Dorsolateral prefrontal cortex (tissue), 120 donors: ENCODE measurements at regions of chr16 and their contacts with region 1.

Region 1: GRCh38 chr16:50548125-50548908 is at the start of gene NKD1:
- DNase-seq: peak in 9 of 10 donors; percentile 39 to 84 (median 67)
- H3K4me3 ChIP-seq: peak within 1 kb of the TSS; percentile 54 to 94 (median 80)
- H3K27ac ChIP-seq: peak within 1 kb of the TSS in 29 of 59 donors; percentile 14 to 83 (median 59)
- H3K27me3 ChIP-seq: peaks cover 0 to 14% (median 0%) of the 10 kb centered on the region in 45 donors
- CTCF ChIP-seq: peak in 1 of 56 donors; percentile 8
- total RNA-seq, gene NKD1: 3.8 to 25.7 (median 12.7) TPM

Region 2: DNA sequence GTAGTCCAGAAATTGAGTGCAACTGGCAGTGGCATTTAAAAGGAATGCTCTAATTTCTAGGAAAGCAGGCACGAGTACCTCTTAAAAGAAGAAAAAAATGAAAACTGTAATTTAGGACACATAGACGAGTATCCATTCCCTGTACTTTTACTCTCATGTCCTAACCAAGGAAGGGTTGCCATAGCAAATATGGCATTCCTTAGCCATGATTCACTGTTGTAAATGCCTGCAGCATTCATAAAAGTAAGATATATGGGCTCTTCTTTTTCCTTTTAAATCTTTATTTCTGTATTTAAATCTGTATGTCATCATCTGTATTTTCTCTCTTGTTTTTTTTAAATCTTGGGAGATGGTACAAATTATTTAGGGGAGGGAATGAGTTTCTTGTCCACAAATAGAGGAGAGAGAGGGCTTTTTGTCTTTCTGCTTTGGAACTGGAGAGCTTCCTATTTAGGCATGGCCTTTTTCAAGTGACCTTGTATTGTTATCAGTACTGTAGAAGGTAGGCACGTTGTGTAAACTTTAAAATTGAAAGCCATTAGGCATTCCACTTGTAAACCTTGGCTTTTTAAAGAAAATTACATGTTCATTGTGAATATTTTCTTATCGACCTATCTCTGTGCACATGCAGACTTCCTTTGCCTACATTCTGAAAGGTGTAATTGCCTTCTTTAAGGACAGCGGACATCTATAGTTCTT is 345.2 kb before region 1 on chr16:
- intact Hi-C with region 1: no loop called
- DNase-seq: no peak
- H3K4me3 ChIP-seq: no peak overlapping the region
- H3K27ac ChIP-seq: peak overlapping the region in 2 of 59 donors; percentile 55 to 65
- H3K27me3 ChIP-seq: no peaks in the 10 kb centered on the region
- CTCF ChIP-seq: no peak

Region 3: DNA sequence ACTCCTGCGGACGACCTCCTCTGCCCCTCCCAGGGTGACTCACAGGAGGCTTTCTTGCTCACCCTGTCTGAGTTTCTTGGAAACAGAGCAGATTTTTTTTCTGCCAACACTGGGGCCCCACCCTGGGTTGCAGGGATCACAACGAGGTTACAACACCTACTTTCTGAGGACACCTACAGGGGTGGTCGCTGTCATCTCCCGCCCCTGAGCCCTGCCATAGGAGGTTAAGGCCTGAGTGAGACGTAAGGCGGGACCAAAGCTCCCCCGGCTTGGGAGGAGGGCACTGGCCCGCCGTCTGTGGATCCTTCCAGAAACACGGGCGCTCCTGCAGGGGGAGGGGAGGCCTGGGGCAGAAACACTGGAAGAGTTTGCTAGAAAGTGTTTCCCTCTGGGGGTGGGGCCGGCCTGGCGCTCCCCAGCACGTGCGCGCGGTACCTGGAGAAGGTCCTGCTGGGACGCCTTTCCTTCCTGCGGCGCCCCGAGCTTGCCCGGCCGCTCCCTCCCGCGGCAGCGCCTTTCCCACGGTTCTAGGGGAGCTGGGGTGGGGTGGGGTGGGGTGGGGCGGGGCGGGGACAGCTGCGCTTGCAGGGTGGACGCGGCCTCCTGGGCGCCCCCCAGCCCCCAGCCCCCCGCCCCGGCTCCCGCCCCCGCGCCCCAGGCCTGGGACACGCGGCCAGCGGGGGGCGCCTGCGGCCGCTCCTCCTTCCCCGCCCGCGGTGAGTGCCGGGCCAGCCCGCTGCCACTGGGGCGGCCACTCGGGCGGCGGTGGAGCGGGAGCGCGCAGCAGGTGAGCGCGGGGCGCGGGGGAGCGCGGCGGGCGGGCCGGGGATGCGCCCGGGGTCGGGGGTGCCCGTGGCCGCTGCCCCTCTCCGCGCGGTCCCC is 302.7 kb before region 1 on chr16:
- intact Hi-C with region 1: loop called in 1 of 2 experiments (anchors 10 kb)
- DNase-seq: peak in 1 of 10 donors; percentile 63
- H3K4me3 ChIP-seq: peak overlapping the region; percentile 41 to 76 (median 65)
- H3K27ac ChIP-seq: peak overlapping the region in 1 of 59 donors; percentile 21
- H3K27me3 ChIP-seq: peaks cover 0 to 19% (median 0%) of the 10 kb centered on the region in 45 donors
- CTCF ChIP-seq: peak in 23 of 56 donors; percentile 12 to 62 (median 34)

Region 4: DNA sequence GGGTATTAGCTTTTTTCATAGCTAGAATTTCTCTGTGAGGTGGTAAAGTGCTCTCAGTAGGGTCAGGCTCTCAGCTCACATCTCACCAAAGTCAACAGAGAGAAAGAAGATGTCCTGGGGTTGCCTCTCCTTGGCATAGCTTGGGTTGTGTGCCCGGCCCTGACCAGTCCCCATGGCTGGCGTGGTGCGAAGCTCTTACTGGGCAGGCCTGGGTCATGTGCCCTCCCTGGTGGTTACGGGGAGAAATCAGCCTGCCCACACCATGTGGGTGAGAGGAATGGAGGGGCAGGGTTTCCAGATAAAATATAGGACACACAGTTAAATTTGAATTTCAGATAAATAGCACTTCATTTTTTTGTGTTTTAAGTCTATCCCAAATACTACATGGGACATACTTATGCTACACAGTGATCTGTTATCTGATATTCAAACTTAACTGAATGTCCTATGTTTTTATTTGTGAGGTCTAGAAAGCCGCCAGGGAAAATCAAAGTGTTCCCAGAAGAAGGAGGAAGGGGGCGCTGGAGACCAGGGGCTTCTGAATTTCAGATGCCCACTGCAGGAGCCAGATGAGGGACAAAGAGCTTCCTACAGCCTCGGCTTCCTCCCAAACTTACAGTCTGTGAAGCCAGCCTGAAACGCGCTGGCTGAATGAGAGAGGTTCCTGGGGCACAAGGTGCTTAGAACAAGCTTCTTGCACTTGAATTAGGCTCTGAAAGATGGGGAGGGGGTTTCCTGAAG is 45.3 kb after region 1 on chr16:
- intact Hi-C with region 1: loop called (anchors 5 kb)
- DNase-seq: no peak
- H3K4me3 ChIP-seq: no peak overlapping the region
- H3K27ac ChIP-seq: no peak overlapping the region
- H3K27me3 ChIP-seq: no peaks in the 10 kb centered on the region
- CTCF ChIP-seq: peak in 46 of 56 donors; percentile 11 to 66 (median 35)

Region 5: GRCh38 chr16:50692999-50693781 is 144.9 kb after region 1 on chr16 and contains the start of gene NOD2:
- intact Hi-C with region 1: no loop called
- DNase-seq: no peak
- H3K4me3 ChIP-seq: peak within 1 kb of the TSS in 55 of 59 donors; percentile 16 to 69 (median 43)
- H3K27ac ChIP-seq: peak within 1 kb of the TSS in 2 of 59 donors; percentile 27 to 46
- H3K27me3 ChIP-seq: peaks cover 0 to 31% (median 6%) of the 10 kb centered on the region in 45 donors
- CTCF ChIP-seq: no peak
- total RNA-seq, gene NOD2: 0.08 to 3.5 (median 0.84) TPM in 115 of 120 experiments, not detected in the others